Ascending aorta (tissue), 2 donors: ENCODE measurements at regions of chr14 and their contacts with region 1.

Region 1: DNA sequence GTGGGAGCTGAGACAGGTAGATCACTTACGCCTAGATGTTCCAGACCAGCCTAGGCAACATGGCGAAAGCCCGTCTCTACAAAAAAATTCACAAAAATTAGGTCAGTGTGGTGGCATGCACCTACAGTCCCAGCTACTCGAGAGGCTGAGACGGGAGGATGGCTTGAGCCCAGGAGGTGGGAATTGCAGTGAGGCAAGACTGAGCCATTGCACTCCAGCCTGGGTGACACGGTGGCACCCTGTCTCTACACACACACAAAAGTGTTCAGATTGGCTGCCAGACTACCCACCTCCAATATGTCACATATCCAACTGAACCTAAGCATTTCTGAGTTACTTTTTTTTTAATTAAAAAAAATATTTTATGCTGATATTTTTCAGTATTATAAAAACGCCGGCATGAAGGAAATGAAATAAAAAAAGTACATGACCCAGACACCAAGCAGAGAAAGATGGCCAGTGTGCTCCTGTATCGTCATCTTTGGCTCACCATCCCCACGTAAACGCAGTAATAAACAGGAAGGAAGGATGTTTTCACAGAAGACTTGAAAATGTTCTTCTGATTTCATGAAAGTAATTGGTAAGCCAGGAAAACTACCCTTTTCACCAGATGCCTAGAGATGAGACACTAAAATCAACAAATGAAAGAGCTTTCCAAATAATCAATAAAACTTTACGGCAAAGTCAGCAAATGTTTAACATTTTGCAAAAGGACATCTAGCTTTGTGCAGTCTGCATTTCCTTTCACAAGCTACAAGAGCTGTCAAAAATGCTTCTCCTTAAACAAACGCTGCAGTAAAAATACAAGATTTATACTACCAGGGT is 26.4 kb downstream of the CDC42BPB start:
- DNase-seq: peak in 1 of 2 donors; percentile 33
- H3K4me3 ChIP-seq: no peak overlapping the region
- H3K27ac ChIP-seq: peak overlapping the region in 1 of 2 donors; percentile 1
- H3K4me1 ChIP-seq: peaks cover 2 to 16% of the 10 kb centered on the region in 2 donors
- H3K27me3 ChIP-seq: no peaks in the 10 kb centered on the region
- CTCF ChIP-seq: no peak

Region 2: DNA sequence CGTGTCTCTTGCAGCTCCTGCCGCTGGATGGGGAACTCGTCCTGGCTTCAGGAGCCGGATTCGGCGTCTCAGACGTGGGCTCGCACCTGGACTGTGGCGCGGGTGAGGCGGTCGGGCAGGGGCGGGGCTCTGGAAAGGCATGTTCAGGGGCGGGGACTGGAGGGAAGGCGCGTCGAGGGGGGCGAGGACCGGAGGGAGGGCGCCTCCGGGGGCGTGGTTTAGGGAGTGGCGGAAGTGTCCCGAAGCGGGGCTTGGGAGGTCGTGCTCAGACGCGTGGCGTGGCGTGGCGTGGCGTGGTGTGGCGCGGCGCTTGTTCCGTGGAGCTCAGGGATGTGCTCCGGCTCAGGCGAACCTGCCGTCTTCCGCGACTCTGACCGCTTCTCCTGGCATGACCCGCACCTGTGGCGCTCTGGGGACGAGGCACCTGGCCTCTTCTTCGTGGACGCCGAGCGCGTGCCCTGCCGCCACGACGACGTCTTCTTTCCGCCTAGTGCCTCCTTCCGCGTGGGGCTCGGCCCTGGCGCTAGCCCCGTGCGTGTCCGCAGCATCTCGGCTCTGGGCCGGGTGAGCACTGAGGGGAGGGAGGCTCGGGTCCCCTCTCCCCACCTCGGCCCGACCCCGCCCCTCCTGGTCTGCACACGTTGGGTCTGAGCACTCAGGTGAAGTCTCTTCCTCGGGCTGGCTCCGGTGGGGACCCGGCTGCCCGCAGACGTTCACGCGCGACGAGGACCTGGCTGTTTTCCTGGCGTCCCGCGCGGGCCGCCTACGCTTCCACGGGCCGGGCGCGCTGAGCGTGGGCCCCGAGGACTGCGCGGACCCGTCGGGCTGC is 102.3 kb before region 1 on chr14:
- intact Hi-C with region 1: no loop called
- DNase-seq: peak in 1 of 2 donors; percentile 82
- H3K4me3 ChIP-seq: peak overlapping the region; percentile 44 to 57
- H3K27ac ChIP-seq: no peak overlapping the region
- H3K4me1 ChIP-seq: peaks cover 19 to 23% of the 10 kb centered on the region in 2 donors
- H3K27me3 ChIP-seq: peaks cover 26% of the 10 kb centered on the region
- CTCF ChIP-seq: no peak

Region 3: DNA sequence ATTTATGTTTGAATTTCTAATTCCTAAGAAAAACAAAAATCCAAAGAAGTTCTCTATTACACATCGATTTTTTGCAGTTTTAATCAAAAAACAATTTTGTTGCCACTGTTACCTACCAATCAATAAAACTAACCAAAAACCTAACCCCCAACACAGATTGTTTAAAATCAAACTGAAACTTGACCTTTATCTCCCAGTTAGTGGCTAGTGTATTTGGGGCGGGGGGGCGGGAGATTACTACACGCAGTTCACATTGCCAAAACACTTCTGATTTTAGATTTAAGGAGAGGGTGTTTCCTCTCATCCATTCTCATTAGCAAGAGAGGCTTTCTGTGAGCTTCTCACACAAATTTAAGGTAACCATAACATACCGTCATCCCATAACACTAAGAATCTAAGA is 20.0 kb after region 1 on chr14:
- intact Hi-C with region 1: loop called (anchors 1 kb)
- DNase-seq: no peak
- H3K4me3 ChIP-seq: no peak overlapping the region
- H3K27ac ChIP-seq: no peak overlapping the region
- H3K4me1 ChIP-seq: peaks cover 4 to 9% of the 10 kb centered on the region in 2 donors
- H3K27me3 ChIP-seq: no peaks in the 10 kb centered on the region
- CTCF ChIP-seq: no peak